Esophagus muscularis mucosa (tissue), 4 donors: ENCODE measurements at regions of chr1 and their contacts with region 1.

Region 1: DNA sequence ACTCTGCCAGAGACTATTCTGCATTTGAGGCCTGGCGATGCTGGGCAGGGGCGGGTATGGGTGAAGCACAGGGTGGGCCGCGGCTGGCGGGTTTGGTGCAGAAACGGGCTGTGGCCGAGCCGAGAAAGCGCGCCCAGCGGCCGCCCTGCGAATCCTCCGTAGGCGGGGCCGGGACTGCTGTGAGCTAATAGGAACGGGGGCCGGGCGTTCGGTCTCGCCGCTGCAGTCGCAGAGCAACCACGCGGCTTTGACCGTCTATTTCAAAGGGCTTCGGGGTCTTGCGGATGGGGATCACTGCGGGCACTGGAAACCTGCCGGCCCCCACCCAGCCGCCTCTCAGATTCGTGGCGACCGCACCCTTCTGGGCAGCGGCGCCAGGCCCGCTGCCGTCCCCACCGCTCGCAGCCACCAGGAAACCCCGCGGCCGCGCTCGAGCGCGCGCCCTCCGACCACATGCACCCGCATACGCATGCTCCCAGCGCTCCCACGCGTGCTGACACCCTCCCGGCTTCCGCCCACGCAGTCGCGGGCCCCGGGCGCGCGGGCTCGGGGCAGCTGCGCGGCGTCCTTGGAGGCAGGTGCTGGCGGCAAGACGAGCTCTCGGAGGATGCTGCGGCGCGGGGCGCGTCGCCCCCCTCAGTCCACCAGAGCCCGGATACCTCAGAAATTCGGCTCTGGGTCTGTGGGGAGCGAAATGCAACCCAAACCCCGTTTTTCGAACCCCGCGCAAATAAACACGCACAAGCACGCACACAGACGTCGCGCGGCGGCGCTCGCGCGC is 32.6 kb downstream of the DNTTIP2 start:
- DNase-seq: peak; percentile 98
- H3K4me3 ChIP-seq: peak overlapping the region; percentile 75 to 93 (median 82)
- H3K27ac ChIP-seq: peak overlapping the region; percentile 94 to 100 (median 100)
- H3K4me1 ChIP-seq: peaks cover 24 to 37% (median 33%) of the 10 kb centered on the region in 4 donors
- H3K27me3 ChIP-seq: no peaks in the 10 kb centered on the region
- CTCF ChIP-seq: peak in 2 of 3 experiments; percentile 29 to 66
- EP300 ChIP-seq: no peak
- POLR2A ChIP-seq: peak; percentile 11

Region 2: GRCh38 chr1:93304716-93305138 is 541.7 kb before region 1 on chr1:
- intact Hi-C with region 1: loop called (anchors 10 kb)
- DNase-seq: no peak
- H3K4me3 ChIP-seq: no peak overlapping the region
- H3K27ac ChIP-seq: no peak overlapping the region
- H3K4me1 ChIP-seq: no peaks in the 10 kb centered on the region
- H3K27me3 ChIP-seq: no peaks in the 10 kb centered on the region
- CTCF ChIP-seq: peak; percentile 74 to 93 (median 85)
- EP300 ChIP-seq: no peak
- POLR2A ChIP-seq: no peak

Region 3: GRCh38 chr1:93591676-93592550 is 254.5 kb before region 1 on chr1:
- intact Hi-C with region 1: no loop called
- DNase-seq: no peak
- H3K4me3 ChIP-seq: no peak overlapping the region
- H3K27ac ChIP-seq: peak overlapping the region in 2 of 4 donors; percentile 1 to 34
- H3K4me1 ChIP-seq: peaks cover 54 to 57% (median 56%) of the 10 kb centered on the region in 4 donors
- H3K27me3 ChIP-seq: no peaks in the 10 kb centered on the region
- CTCF ChIP-seq: no peak
- EP300 ChIP-seq: no peak
- POLR2A ChIP-seq: no peak

Region 4: GRCh38 chr1:93909146-93910050 is 63.0 kb after region 1 on chr1 and contains the start of gene GCLM:
- intact Hi-C with region 1: no loop called
- DNase-seq: peak; percentile 96
- H3K4me3 ChIP-seq: peak within 1 kb of the TSS; percentile 93 to 98 (median 96)
- H3K27ac ChIP-seq: peak within 1 kb of the TSS; percentile 81 to 92 (median 86)
- H3K4me1 ChIP-seq: peaks cover 13 to 29% (median 23%) of the 10 kb centered on the region in 4 donors
- H3K27me3 ChIP-seq: no peaks in the 10 kb centered on the region
- CTCF ChIP-seq: peak; percentile 86 to 92 (median 92)
- EP300 ChIP-seq: no peak
- POLR2A ChIP-seq: no peak
- total RNA-seq, gene GCLM: 4.2 to 18.4 (median 6.3) TPM